ENCODE measurements at regions of chr3 and their contacts with region 1.

Region 1: GRCh38 chr3:73086071-73086494 is 24.6 kb downstream of the EBLN2 start:
- DNase-seq: peak in 1 of 2 donors; percentile 49
- ATAC-seq: peak; percentile 73

Region 2: GRCh38 chr3:72847751-72848702 is 238.1 kb before region 1 on chr3 and contains the start of gene SHQ1:
- intact Hi-C with region 1: loop called in 1 of 2 experiments (anchors 5 kb)
- DNase-seq: peak; percentile 96 to 99
- ATAC-seq: peak; percentile 97
- total RNA-seq, gene SHQ1: 21.5 to 22.0 TPM

Region 3: DNA sequence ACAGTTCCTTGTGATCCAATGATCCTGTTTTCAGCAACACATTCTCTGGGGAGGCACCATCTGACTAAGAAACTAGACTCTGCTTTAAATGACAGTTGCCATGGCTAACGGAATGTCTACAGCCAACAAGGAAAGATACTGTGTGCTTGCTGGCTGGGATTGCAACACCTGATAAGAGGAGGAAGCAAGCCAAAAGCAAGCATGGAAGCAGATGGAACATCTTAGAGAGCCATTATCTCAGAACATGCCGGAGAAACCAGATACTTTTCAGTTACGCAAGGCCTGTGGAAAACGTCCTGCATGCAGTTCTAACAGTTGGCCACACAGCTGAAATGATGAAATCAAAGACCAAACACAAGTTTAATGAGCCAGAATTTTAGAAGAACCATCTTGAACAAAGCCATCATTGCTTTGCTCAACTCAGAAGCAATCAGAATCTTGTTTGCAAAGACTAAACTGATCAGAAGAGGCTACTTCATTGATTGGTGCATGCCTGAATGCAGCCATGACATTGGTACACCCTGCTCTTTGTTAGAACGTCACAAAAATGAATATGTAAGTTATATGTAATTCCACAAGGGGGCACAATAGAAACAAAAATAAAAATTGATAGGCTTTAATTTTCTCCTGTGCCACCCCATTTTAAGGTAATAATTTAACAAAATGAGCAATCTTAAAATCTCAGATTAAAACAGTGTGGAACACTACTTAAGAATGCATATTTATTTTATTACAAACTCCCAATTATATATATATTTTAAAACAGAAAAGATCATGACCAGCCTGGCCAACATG is 147.4 kb before region 1 on chr3:
- intact Hi-C with region 1: loop called in 1 of 2 experiments (anchors 10 kb)
- DNase-seq: no peak
- ATAC-seq: peak; percentile 72

Measured in left colon (tissue), 2 donors.